PC-9 (cell line): ENCODE measurements at regions of chr7 and their contacts with region 1.

Region 1: DNA sequence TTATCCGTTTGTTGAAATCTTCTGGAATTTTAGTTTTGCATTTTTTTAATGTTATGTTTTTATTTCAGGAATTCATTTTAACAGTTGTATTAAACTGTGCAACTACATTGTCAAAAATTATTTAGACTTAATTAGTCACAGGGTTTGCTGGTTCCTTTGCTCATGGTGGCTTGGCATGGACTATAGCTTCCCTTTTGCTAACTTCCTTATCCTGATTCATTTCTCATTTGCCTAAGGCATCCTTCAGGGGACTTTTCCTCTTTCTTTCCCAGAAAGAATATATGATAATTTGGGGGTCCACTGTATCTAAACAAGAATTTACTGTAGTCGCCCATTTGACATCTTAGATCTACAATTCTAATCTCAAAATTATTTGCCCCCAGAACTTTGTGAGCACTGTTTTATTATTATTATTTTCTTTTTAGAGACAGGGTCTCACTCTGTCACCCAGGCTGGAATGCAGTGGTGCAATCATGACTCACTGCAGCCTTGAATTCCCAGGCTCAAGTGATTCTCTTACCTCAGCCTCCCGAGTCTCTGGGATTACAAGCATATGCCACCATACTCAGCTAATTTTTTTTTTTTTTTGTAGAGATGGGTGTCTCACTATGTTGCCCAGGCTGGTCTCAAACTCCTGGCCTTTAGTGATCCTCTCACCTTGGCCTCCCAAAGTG is 13.9 kb downstream of the FIGNL1 start:
- DNase-seq: peak; percentile 36 to 80
- H3K4me3 ChIP-seq: no peak overlapping the region
- H3K27ac ChIP-seq: peak overlapping the region; percentile 85
- H3K4me1 ChIP-seq: peaks cover 17% of the 10 kb centered on the region
- H3K27me3 ChIP-seq: no peaks in the 10 kb centered on the region
- CTCF ChIP-seq: no peak

Region 2: GRCh38 chr7:50449881-50450589 is 13.8 kb after region 1 on chr7 and contains the start of gene FIGNL1:
- CTCF ChIA-PET with region 1: no interaction called
- POLR2A ChIA-PET with region 1: no interaction called
- intact Hi-C with region 1: loop called (anchors 1 kb)
- DNase-seq: peak; percentile 74 to 81
- H3K4me3 ChIP-seq: peak within 1 kb of the TSS; percentile 75
- H3K27ac ChIP-seq: peak within 1 kb of the TSS; percentile 94
- H3K4me1 ChIP-seq: peaks cover 41% of the 10 kb centered on the region
- H3K27me3 ChIP-seq: peaks cover under 1% of the 10 kb centered on the region; the same call in 1 of the 2 replicates
- CTCF ChIP-seq: no peak
- total RNA-seq, gene FIGNL1: 18.7 and 25.7 TPM in 2 replicates

Region 3: GRCh38 chr7:50610521-50611277 is 174.4 kb after region 1 on chr7:
- CTCF ChIA-PET with region 1: no interaction called
- POLR2A ChIA-PET with region 1: interaction called, 10 read pairs
- intact Hi-C with region 1: no loop called
- DNase-seq: peak; percentile 14 to 45
- H3K4me3 ChIP-seq: no peak overlapping the region
- H3K27ac ChIP-seq: no peak overlapping the region
- H3K4me1 ChIP-seq: peaks cover 6% of the 10 kb centered on the region
- H3K27me3 ChIP-seq: no peaks in the 10 kb centered on the region
- CTCF ChIP-seq: no peak